HEK293 (cell line): ENCODE measurements at regions of chr11 and their contacts with region 1.

Region 1: DNA sequence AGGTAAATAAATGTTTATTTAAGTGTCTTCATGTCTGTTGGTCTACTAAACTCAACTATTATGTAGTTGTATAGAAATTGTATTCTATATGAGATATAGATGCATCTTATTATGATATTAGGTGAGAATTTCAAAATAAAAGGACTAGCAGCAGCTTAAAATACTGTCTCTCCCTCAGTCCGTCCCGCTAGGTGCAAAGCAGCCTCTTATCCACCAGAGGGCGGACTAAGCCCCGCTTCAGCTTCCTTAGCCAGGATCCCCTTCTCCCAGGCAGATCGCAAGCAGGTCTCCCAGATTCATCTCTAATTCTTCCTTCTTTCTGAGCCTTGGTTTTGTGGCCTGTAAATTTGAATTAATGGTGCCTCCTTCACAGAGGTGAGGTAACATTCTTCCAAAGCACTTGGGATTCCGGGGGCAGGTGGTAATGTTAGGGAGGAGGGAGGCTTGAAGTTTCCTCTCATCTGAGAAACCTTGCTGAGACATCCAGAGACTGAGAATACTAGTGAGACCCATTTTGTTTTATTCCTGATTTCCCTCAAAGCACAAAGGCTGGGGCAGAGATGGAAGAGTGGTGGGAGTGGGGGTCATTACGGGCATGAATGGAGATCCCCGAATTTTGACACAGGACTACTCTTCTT is 13.5 kb upstream of the INSC start:
- H3K4me3 ChIP-seq: no peak overlapping the region
- H3K27ac ChIP-seq: no peak overlapping the region
- H3K4me1 ChIP-seq: no peaks in the 10 kb centered on the region
- CTCF ChIP-seq: peak; percentile 27; the same call in 1 of the 2 replicates

Region 2: DNA sequence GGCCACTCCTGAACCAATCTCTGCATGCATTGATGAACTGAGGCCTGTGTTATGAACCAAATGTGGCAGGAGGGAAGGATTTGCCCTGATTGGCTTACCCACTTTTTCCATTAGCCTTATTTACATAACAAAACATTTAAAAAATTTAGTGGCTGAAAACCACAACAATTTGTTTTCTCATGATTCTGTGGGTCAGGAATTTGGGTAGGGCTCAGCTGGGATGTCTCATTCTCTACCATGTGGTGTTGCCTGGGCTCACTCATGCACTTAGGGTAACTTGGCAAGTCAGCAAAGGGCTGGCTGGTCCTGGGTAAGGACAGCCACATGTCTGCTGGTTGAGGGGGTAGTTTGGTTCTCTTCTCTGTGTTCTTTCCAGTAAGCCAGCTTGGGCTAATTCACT is 174.0 kb before region 1 on chr11:
- CTCF ChIA-PET with region 1: no interaction called
- POLR2A ChIA-PET with region 1: no interaction called
- H3K4me3 ChIP-seq: no peak overlapping the region
- H3K27ac ChIP-seq: no peak overlapping the region
- H3K4me1 ChIP-seq: no peaks in the 10 kb centered on the region
- CTCF ChIP-seq: no peak

Region 3: GRCh38 chr11:15113381-15113780 is 12.2 kb after region 1 on chr11:
- CTCF ChIA-PET with region 1: interaction called, 25 read pairs
- POLR2A ChIA-PET with region 1: no interaction called
- H3K4me3 ChIP-seq: no peak overlapping the region
- H3K27ac ChIP-seq: no peak overlapping the region
- H3K4me1 ChIP-seq: no peaks in the 10 kb centered on the region
- CTCF ChIP-seq: no peak

Region 4: GRCh38 chr11:15159085-15159484 is 57.9 kb after region 1 on chr11:
- CTCF ChIA-PET with region 1: interaction called, 24 read pairs
- POLR2A ChIA-PET with region 1: no interaction called
- H3K4me3 ChIP-seq: no peak overlapping the region
- H3K27ac ChIP-seq: no peak overlapping the region
- H3K4me1 ChIP-seq: no peaks in the 10 kb centered on the region
- CTCF ChIP-seq: no peak

Region 5: DNA sequence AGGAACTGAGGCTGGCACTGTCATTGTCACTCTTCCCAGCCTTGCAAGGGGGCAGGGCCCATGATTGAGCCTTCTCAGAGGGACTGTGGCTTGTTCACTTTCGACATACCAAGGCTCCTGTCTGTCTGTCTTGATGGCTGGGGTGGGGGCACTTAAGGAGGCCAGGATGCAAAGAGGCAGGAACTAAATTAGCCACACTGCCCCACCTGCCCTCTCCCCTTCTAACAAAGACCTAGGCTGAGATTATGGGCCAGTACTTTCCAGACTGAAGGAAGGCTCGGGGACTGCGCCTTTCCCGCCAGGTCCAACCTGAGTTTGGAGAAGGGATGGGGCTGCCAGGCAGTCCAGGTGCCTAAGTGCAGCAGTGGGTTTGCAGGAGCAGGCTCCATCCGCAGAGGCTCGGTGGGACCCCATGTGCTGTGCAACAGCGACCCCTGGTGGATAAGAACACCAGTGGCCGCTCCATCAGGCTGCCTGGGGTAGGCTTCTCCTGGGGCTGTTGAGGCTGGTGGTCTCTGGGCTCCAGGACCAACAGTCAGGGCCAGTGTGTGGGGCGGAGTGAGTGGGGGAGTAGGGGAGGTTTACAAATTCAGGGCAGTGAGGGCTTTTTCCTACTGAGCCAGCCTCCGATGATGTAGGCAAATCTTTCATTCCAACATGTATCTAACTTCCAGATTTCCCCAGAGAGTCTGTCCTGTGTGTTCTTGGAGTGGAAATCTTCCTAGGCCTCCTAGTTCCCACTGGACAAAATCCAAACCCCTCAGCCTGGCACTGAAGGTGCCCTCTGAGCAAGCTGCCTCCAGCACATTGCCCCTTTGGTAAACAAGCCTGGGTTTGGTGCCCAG is 107.4 kb after region 1 on chr11:
- CTCF ChIA-PET with region 1: interaction called, 46 read pairs
- POLR2A ChIA-PET with region 1: interaction called, 3 read pairs
- H3K4me3 ChIP-seq: no peak overlapping the region
- H3K27ac ChIP-seq: no peak overlapping the region
- H3K4me1 ChIP-seq: no peaks in the 10 kb centered on the region
- CTCF ChIP-seq: peak; percentile 86